A549 (cell line): ENCODE measurements at regions of chr2 and their contacts with region 1.

Region 1: GRCh38 chr2:226030788-226031646 is 631.5 kb downstream of the NYAP2 start:
- DNase-seq: peak; percentile 67 to 81
- ATAC-seq: peak; percentile 97 to 98
- H3K4me3 ChIP-seq: peak overlapping the region; percentile 58
- H3K27ac ChIP-seq: peak overlapping the region; percentile 87 to 90
- H3K4me1 ChIP-seq: peaks cover 20% of the 10 kb centered on the region; the same call in 2 of the 3 replicates
- CTCF ChIP-seq: no peak
- EP300 ChIP-seq: no peak
- POLR2A ChIP-seq: peak; percentile 32
- RAD21 ChIP-seq: peak in 1 of 2 experiments; percentile 38; a peak in 2 of 5 replicates

Region 2: DNA sequence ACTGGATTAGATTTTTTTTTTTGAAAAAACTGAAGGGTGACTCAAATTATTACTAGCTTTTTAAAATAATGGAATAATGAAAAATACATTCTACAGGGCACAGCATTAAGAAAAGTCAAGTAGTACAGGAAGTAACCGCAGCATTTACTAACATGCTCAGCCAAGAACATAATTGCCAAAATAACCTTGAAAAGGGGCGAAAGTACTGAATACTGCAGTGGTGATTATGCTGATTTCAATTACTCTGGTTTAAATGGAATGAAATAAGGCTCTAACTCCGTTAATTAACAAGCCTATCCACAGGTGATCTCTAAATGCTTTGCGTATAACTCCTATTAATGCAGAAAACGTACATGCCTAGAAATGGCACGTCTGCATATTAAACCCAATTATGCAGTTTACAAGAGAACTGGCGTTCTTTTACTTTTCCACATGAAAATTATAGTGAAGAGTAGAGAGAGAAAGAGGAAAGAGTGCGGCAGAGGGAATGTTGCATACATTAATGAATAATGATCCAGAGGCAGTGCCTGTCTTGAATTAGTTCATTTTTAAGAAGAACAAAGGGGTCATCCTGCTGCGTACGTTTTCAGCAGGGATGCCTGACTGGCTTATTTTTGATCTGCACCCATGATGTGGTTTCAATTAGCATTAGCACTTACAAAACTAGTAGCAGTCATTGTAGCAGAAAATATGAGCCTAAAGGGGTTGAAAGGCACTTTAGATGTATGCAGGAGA is 19.1 kb before region 1 on chr2:
- CTCF ChIA-PET with region 1: no interaction called
- POLR2A ChIA-PET with region 1: no interaction called
- DNase-seq: no peak
- ATAC-seq: no peak
- H3K4me3 ChIP-seq: no peak overlapping the region
- H3K27ac ChIP-seq: no peak overlapping the region
- H3K4me1 ChIP-seq: no peaks in the 10 kb centered on the region
- CTCF ChIP-seq: no peak
- EP300 ChIP-seq: no peak
- POLR2A ChIP-seq: no peak
- RAD21 ChIP-seq: no peak

Region 3: DNA sequence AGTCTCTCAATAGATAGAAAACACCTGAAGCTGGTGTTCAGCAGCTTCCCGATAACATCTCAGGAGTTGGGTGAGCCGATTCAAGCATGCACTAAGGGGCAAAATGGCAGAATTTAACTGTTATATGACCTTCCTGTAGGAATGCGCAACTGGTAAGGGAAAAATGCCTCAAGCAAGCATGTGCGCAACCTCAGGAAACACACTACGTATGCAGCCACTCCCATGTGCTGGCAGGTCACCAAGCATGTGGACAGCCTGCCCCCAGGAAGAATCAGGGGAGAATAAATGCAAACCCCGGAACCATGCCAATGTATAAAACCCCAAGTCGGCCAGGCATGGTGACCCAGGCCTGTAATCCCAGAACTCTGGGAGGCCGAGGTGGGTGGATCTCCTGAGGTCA is 14.1 kb after region 1 on chr2:
- CTCF ChIA-PET with region 1: no interaction called
- POLR2A ChIA-PET with region 1: no interaction called
- DNase-seq: no peak
- ATAC-seq: no peak
- H3K4me3 ChIP-seq: no peak overlapping the region
- H3K27ac ChIP-seq: no peak overlapping the region
- H3K4me1 ChIP-seq: peaks cover 4% of the 10 kb centered on the region; the same call in 1 of the 3 replicates
- CTCF ChIP-seq: no peak
- EP300 ChIP-seq: no peak
- POLR2A ChIP-seq: no peak
- RAD21 ChIP-seq: no peak

Region 4: DNA sequence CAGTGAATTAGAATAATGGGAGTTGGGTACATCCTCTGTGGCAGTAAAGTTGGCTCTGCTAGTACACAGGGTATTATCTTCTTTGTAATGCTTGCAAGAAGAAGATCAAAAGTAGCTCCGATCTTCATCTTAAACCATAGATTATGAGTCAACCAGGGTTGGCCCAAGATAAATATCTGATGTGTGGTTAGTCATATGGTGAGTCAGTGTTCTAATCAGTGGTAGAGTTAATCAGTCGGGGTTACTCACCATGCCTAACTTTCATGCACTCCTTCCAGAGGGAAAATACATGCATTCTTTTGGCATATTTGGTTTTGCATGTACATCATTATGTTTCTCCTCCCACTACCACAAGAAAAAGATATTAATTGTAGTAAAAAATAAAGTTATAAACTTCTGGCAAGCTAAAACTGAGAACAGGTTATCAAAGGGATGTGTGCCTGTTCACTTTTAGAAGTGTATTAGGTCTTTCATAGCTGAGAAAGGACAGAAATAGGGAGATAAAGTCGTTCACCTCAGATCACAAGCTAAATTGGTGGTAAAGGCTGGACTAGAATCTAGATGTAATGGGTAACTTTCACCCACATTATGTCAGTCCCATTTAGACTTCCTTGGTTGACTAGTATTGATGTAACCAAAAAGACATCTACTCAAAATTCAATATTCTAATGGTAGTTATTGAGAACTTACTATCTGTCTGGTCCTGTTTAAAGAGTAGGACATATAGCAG is 84.2 kb after region 1 on chr2:
- CTCF ChIA-PET with region 1: no interaction called
- POLR2A ChIA-PET with region 1: interaction called, 13 read pairs
- DNase-seq: peak; percentile 51 to 92
- ATAC-seq: peak; percentile 75 to 86
- H3K4me3 ChIP-seq: no peak overlapping the region
- H3K27ac ChIP-seq: peak overlapping the region; percentile 86 to 90
- H3K4me1 ChIP-seq: peaks cover 57% of the 10 kb centered on the region
- CTCF ChIP-seq: no peak
- EP300 ChIP-seq: peak; percentile 94 to 95; a peak in 4 of 5 replicates
- POLR2A ChIP-seq: no peak
- RAD21 ChIP-seq: peak; percentile 48 to 65